ENCODE measurements at regions of chr6 and their contacts with region 1.

Region 1: GRCh38 chr6:75208298-75209183 is 2.7 kb upstream of the COL12A1 start:
- DNase-seq: peak; percentile 88
- H3K4me3 ChIP-seq: peak overlapping the region in 2 of 4 donors; percentile 4 to 14
- H3K27ac ChIP-seq: peak overlapping the region; percentile 22 to 72 (median 58)
- H3K4me1 ChIP-seq: peaks cover 4 to 61% (median 23%) of the 10 kb centered on the region in 4 donors
- H3K27me3 ChIP-seq: peaks cover 50% of the 10 kb centered on the region
- CTCF ChIP-seq: peak; percentile 80 to 89 (median 85)
- EP300 ChIP-seq: no peak
- POLR2A ChIP-seq: no peak

Region 2: GRCh38 chr6:73739096-73739495 is 1469.4 kb before region 1 on chr6:
- in situ Hi-C with region 1: loop called (anchors 10 to 25 kb)
- intact Hi-C with region 1: loop called (anchors 5 kb)
- DNase-seq: no peak
- H3K4me3 ChIP-seq: no peak overlapping the region
- H3K27ac ChIP-seq: no peak overlapping the region
- H3K4me1 ChIP-seq: peaks cover 0 to 22% (median 0%) of the 10 kb centered on the region in 4 donors
- H3K27me3 ChIP-seq: no peaks in the 10 kb centered on the region
- CTCF ChIP-seq: peak; percentile 76 to 87 (median 83)
- EP300 ChIP-seq: no peak
- POLR2A ChIP-seq: no peak

Region 3: DNA sequence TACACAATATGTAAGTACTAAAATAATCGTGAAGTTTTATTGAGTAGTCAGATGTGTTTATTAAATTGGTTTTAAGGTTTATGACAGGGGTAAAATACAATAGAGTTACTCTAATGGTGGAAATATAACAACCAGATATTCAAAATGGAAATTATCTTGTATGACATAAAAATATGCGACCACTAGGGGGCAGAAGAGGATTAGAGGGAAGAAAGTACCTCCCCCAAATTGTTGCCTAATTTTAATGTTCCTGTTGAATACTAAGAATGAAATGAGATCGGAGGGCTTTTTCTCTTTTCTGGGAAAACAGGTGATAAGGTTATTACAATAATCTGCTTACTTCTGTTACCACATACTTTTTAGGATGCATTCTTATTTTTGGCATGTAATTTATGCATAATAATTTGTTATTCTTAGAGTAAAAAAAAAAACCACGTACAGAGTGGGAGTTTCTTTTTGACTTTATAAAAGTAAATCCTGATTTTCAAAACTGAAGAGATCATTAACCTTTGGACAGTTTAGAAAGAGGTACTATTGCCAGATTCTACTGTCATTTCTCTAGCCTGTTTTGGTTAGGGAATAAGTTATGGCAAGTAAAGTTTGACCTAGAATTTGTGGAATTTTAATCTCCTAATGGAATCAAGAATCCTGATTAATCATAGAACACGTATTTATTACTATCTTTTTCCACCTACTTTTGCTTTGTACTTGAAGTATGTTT is 1353.4 kb before region 1 on chr6:
- in situ Hi-C with region 1: loop called in 2 of 4 experiments (anchors 25 kb)
- intact Hi-C with region 1: loop called (anchors 2 kb)
- DNase-seq: no peak
- H3K4me3 ChIP-seq: no peak overlapping the region
- H3K27ac ChIP-seq: peak overlapping the region in 2 of 4 donors; percentile 16 to 34
- H3K4me1 ChIP-seq: peaks cover 0 to 4% (median 0%) of the 10 kb centered on the region in 4 donors
- H3K27me3 ChIP-seq: no peaks in the 10 kb centered on the region
- CTCF ChIP-seq: peak; percentile 53 to 81 (median 73)
- EP300 ChIP-seq: no peak
- POLR2A ChIP-seq: no peak

Region 4: GRCh38 chr6:74091136-74091793 is 1117.3 kb before region 1 on chr6:
- in situ Hi-C with region 1: loop called (anchors 10 to 25 kb)
- intact Hi-C with region 1: loop called (anchors 10 kb)
- DNase-seq: no peak
- H3K4me3 ChIP-seq: no peak overlapping the region
- H3K27ac ChIP-seq: peak overlapping the region in 2 of 4 donors; percentile 16 to 20
- H3K4me1 ChIP-seq: peaks cover 0 to 4% (median 0%) of the 10 kb centered on the region in 4 donors
- H3K27me3 ChIP-seq: no peaks in the 10 kb centered on the region
- CTCF ChIP-seq: peak; percentile 45 to 73 (median 69)
- EP300 ChIP-seq: no peak
- POLR2A ChIP-seq: no peak

Region 5: DNA sequence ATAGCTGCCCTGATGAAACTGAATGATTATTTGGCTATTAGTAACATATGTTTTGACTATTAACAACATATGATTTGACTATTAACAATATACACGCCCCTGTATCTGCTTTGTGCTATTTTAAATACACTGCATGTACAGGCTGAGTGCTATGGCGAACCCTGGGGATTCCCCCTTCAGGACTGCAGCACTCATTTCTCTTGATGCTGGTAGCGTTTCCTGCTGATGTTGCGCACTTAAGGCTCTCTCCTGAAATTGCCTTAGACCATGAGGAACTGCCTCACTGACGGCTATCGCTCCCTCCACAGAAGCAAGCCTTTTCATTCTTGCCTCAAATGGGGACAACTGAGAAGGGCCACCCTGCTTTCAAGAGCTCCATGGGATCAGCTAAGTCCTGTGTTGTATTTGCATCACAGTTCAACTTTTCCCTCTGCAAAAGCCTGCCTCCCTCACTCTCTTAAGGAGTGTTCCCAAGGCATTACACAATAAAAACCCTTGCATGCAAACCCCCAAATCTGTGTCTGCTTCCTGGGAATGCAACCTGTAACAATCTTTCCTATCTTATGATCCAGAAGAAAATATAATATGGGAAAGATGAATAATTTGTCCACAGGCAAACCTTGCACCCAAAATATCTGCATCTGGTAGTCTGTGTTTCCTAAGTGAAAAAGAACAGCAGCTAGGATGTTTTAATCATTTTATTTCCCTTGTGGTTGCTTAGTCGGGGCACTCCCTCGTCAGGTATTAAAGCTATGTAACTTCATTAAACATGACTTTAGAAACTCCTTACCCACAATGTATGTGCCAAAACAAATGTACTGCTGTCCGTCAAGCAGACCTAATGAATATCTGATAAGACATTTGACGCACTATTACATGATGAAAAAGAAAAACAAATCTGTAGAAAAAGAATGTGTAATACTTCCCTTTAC is 459.1 kb before region 1 on chr6:
- in situ Hi-C with region 1: no loop called
- intact Hi-C with region 1: loop called (anchors 10 kb)
- DNase-seq: no peak
- H3K4me3 ChIP-seq: no peak overlapping the region
- H3K27ac ChIP-seq: no peak overlapping the region
- H3K4me1 ChIP-seq: peaks cover 0 to 3% (median 1%) of the 10 kb centered on the region in 4 donors
- H3K27me3 ChIP-seq: no peaks in the 10 kb centered on the region
- CTCF ChIP-seq: no peak
- EP300 ChIP-seq: no peak
- POLR2A ChIP-seq: no peak

Measured in transverse colon (tissue), 4 donors.